ENCODE measurements at regions of chr7 and their contacts with region 1.

Region 1: GRCh38 chr7:30740424-30741181 is 11.3 kb upstream of the INMT start:
- DNase-seq: peak; percentile 78 to 92
- ATAC-seq: peak; percentile 79
- H3K4me3 ChIP-seq: no peak overlapping the region
- H3K27ac ChIP-seq: no peak overlapping the region
- H3K4me1 ChIP-seq: no peaks in the 10 kb centered on the region
- H3K27me3 ChIP-seq: no peaks in the 10 kb centered on the region

Region 2: GRCh38 chr7:30688718-30689221 is 51.8 kb before region 1 on chr7:
- intact Hi-C with region 1: no loop called
- DNase-seq: no peak
- ATAC-seq: no peak
- H3K4me3 ChIP-seq: no peak overlapping the region
- H3K27ac ChIP-seq: no peak overlapping the region
- H3K4me1 ChIP-seq: no peaks in the 10 kb centered on the region
- H3K27me3 ChIP-seq: no peaks in the 10 kb centered on the region

Region 3: GRCh38 chr7:30974605-30975255 is 234.1 kb after region 1 on chr7:
- intact Hi-C with region 1: loop called in 1 of 2 experiments (anchors 5 kb)
- DNase-seq: peak; percentile 70 to 85
- ATAC-seq: peak; percentile 63
- H3K4me3 ChIP-seq: no peak overlapping the region
- H3K27ac ChIP-seq: no peak overlapping the region
- H3K4me1 ChIP-seq: no peaks in the 10 kb centered on the region
- H3K27me3 ChIP-seq: no peaks in the 10 kb centered on the region